MCF 10A (cell line): ENCODE measurements at regions of chr18 and their contacts with region 1.

Region 1: GRCh38 chr18:7000484-7001096 is 117.0 kb downstream of the LAMA1 start:
- DNase-seq: peak; percentile 42
- H3K4me3 Mint-ChIP-seq: no peak overlapping the region
- H3K27ac Mint-ChIP-seq: no peak overlapping the region
- H3K4me1 Mint-ChIP-seq: no peaks in the 10 kb centered on the region
- H3K27me3 Mint-ChIP-seq: no peaks in the 10 kb centered on the region
- CTCF ChIP-seq: peak; percentile 40

Region 2: DNA sequence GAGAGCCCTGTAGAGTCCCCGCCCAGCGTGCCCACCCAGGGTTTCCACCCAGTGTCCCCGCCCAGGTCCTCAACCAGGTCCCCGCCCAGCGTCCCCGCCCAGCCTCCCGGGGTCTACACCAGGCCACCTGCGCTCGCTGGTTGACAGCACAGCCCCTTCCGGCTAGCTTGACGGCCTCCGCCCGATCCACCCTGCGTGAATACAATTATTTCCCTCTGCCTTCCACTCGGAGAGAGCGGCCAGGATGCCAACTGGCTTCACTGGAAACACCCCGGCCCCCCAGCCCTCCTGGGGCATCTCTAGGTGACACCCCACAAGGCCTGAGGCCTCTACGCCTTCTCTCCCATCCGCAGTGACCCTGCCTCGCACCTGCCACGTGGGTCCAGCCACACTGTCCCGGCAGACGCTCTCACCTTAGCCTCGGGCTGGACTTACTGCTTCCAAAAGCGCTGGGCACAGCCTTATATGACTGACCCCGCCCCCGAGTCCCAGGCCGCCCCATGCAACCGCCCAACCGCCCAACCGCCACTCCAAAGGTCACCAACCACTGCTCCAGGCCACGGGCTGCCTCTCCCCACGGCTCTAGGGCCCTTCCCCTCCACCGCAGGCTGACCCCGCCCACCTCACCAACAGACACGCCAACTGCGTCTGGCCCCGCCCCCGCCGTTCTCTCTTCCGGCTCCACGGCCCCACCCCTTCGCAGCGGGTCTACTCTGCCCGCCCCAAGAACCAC is 71.1 kb before region 1 on chr18:
- CTCF ChIA-PET with region 1: interaction called, 16 read pairs
- POLR2A ChIA-PET with region 1: no interaction called
- intact Hi-C with region 1: no loop called
- DNase-seq: no peak
- H3K4me3 Mint-ChIP-seq: no peak overlapping the region
- H3K27ac Mint-ChIP-seq: no peak overlapping the region
- H3K4me1 Mint-ChIP-seq: no peaks in the 10 kb centered on the region
- H3K27me3 Mint-ChIP-seq: no peaks in the 10 kb centered on the region
- CTCF ChIP-seq: no peak

Region 3: GRCh38 chr18:6941996-6942395 is 58.6 kb before region 1 on chr18:
- CTCF ChIA-PET with region 1: interaction called, 5 read pairs
- POLR2A ChIA-PET with region 1: interaction called, 8 read pairs
- intact Hi-C with region 1: loop called (anchors 2 kb)
- DNase-seq: no peak
- H3K4me3 Mint-ChIP-seq: no peak overlapping the region
- H3K27ac Mint-ChIP-seq: no peak overlapping the region
- H3K4me1 Mint-ChIP-seq: no peaks in the 10 kb centered on the region
- H3K27me3 Mint-ChIP-seq: no peaks in the 10 kb centered on the region
- CTCF ChIP-seq: no peak

Region 4: GRCh38 chr18:7133181-7133580 is 132.6 kb after region 1 on chr18:
- CTCF ChIA-PET with region 1: no interaction called
- POLR2A ChIA-PET with region 1: no interaction called
- intact Hi-C with region 1: no loop called
- DNase-seq: no peak
- H3K4me3 Mint-ChIP-seq: no peak overlapping the region
- H3K27ac Mint-ChIP-seq: no peak overlapping the region
- H3K4me1 Mint-ChIP-seq: peaks cover 8% of the 10 kb centered on the region
- H3K27me3 Mint-ChIP-seq: no peaks in the 10 kb centered on the region
- CTCF ChIP-seq: no peak